Activated T-helper 1 cell treated with anti-CD3 and anti-CD28 coated beads, Interleukin-12 subunit alpha, Interleukin-12 subunit beta, Interleukin-2, Interleukin-4 antibody, amounts not matched to agents 30 ng/mL and 10 ng/mL and 1 ng/mL, durations not matched to agents 14 hours and 24 hours and 36 hours (primary cell): ENCODE measurements at regions of chr11 and their contacts with region 1.

Region 1: GRCh38 chr11:118791111-118791965 is at the start of gene DDX6:
- DNase-seq: peak; percentile 85
- H3K4me3 Mint-ChIP-seq: peak within 1 kb of the TSS; percentile 98
- H3K27ac Mint-ChIP-seq: peak within 1 kb of the TSS; percentile 99
- H3K4me1 Mint-ChIP-seq: peaks cover 29% of the 10 kb centered on the region
- H3K27me3 Mint-ChIP-seq: no peaks in the 10 kb centered on the region
- total RNA-seq, gene DDX6: 110 and 112 TPM in 2 replicates

Region 2: GRCh38 chr11:117817368-117818040 is 973.8 kb before region 1 on chr11:
- intact Hi-C with region 1: loop called (anchors 5 kb)
- DNase-seq: peak; percentile 83
- H3K4me3 Mint-ChIP-seq: peak overlapping the region; percentile 70
- H3K27ac Mint-ChIP-seq: peak overlapping the region; percentile 98
- H3K4me1 Mint-ChIP-seq: peaks cover 79% of the 10 kb centered on the region
- H3K27me3 Mint-ChIP-seq: no peaks in the 10 kb centered on the region

Region 3: GRCh38 chr11:118572061-118572980 is 219.0 kb before region 1 on chr11 and contains the start of gene ARCN1:
- intact Hi-C with region 1: loop called (anchors 5 kb)
- DNase-seq: peak; percentile 69
- H3K4me3 Mint-ChIP-seq: peak within 1 kb of the TSS; percentile 98
- H3K27ac Mint-ChIP-seq: peak within 1 kb of the TSS; percentile 96
- H3K4me1 Mint-ChIP-seq: peaks cover 51% of the 10 kb centered on the region
- H3K27me3 Mint-ChIP-seq: no peaks in the 10 kb centered on the region
- total RNA-seq, gene ARCN1: 162 and 165 TPM in 2 replicates

Region 4: GRCh38 chr11:118771547-118772288 is 19.6 kb before region 1 on chr11:
- intact Hi-C with region 1: loop called (anchors 2 kb)
- DNase-seq: no peak
- H3K4me3 Mint-ChIP-seq: no peak overlapping the region
- H3K27ac Mint-ChIP-seq: peak overlapping the region; percentile 82
- H3K4me1 Mint-ChIP-seq: peaks cover 67% of the 10 kb centered on the region
- H3K27me3 Mint-ChIP-seq: no peaks in the 10 kb centered on the region

Region 5: GRCh38 chr11:118883368-118884071 is 92.2 kb after region 1 on chr11 and contains the start of gene CXCR5:
- intact Hi-C with region 1: loop called (anchors 1 kb)
- DNase-seq: no peak
- H3K4me3 Mint-ChIP-seq: peak within 1 kb of the TSS; percentile 52
- H3K27ac Mint-ChIP-seq: peak within 1 kb of the TSS; percentile 87
- H3K4me1 Mint-ChIP-seq: peaks cover 50% of the 10 kb centered on the region
- H3K27me3 Mint-ChIP-seq: no peaks in the 10 kb centered on the region
- total RNA-seq, gene CXCR5: 5.1 and 5.5 TPM in 2 replicates

Region 6: GRCh38 chr11:118956094-118956846 is 164.9 kb after region 1 on chr11 and contains the start of gene UPK2:
- intact Hi-C with region 1: loop called (anchors 1 kb)
- DNase-seq: peak; percentile 77
- H3K4me3 Mint-ChIP-seq: no peak within 1 kb of the TSS
- H3K27ac Mint-ChIP-seq: peak within 1 kb of the TSS; percentile 36
- H3K4me1 Mint-ChIP-seq: peaks cover 7% of the 10 kb centered on the region
- H3K27me3 Mint-ChIP-seq: peaks cover 20% of the 10 kb centered on the region
- total RNA-seq, gene UPK2: not detected in 2 replicates

Region 7: DNA sequence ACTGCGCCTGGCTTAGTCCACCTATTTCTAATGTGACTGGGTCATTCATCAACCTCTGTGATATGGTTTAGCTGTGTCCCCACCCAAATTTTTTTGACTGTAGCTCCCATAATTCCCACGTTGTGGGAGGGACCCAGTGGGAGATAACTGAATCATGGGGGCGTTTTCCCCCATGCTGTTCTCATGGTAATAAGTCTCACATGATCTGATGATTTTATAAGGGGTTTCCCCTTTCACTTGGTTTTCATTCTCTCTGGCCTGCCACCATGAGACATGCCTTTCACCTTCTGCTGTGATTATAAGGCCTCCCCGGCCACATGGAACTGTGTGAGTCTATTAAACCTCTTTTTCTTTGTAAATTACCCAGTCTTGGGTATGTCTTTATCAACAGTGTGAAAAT is 215.3 kb after region 1 on chr11:
- intact Hi-C with region 1: no loop called
- DNase-seq: no peak
- H3K4me3 Mint-ChIP-seq: no peak overlapping the region
- H3K27ac Mint-ChIP-seq: no peak overlapping the region
- H3K4me1 Mint-ChIP-seq: peaks cover 5% of the 10 kb centered on the region
- H3K27me3 Mint-ChIP-seq: no peaks in the 10 kb centered on the region

Region 8: GRCh38 chr11:119101759-119102423 is 310.6 kb after region 1 on chr11 and contains the start of gene DPAGT1:
- intact Hi-C with region 1: loop called (anchors 5 kb)
- DNase-seq: peak; percentile 82
- H3K4me3 Mint-ChIP-seq: peak within 1 kb of the TSS; percentile 91
- H3K27ac Mint-ChIP-seq: peak within 1 kb of the TSS; percentile 95
- H3K4me1 Mint-ChIP-seq: peaks cover 44% of the 10 kb centered on the region
- H3K27me3 Mint-ChIP-seq: no peaks in the 10 kb centered on the region
- total RNA-seq, gene DPAGT1: 81.8 and 84.4 TPM in 2 replicates